ENCODE measurements at regions of chr14 and their contacts with region 1.

Region 1: GRCh38 chr14:20682435-20683124 is 1.8 kb upstream of the RNASE4 start:
- DNase-seq: peak; percentile 63 to 83 (median 79)
- ATAC-seq: peak; percentile 75
- H3K4me3 ChIP-seq: peak overlapping the region; percentile 98
- H3K4me3 Mint-ChIP-seq: no peak overlapping the region
- H3K27ac ChIP-seq: peak overlapping the region; percentile 91
- H3K27ac Mint-ChIP-seq: no peak overlapping the region
- H3K4me1 ChIP-seq: peaks cover 18 to 24% of the 10 kb centered on the region in 2 donors
- H3K4me1 Mint-ChIP-seq: peaks cover 14 to 35% (median 32%) of the 10 kb centered on the region in 7 donors
- H3K27me3 ChIP-seq: no peaks in the 10 kb centered on the region
- H3K27me3 Mint-ChIP-seq: no peaks in the 10 kb centered on the region

Region 2: DNA sequence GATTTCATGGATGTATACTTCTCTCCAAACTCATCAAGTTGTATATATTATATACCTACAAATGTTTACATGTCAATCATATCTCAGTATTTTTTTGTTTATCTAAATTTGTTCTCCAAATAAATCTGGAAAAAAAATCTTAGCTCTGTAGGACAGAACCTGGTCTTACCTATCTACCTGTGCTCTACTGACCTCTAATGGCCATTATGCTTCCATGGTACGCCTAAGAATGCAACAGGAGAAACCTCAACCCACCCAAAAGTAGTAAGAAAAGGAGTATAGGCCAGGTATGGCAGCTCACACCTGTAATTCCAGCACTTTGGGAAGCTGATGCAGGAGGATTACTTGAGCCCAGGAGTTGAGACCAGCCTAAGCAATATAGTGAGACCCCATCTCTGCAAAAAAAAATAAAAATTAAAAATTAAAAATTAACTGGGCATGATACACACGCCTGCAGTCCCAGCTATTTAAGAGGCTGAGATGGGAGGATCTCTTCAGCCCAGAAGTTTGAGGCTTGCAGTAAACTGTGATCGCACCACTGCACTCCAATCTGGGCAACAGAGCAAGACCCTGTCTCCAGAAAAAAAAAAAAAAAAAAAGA is 434.8 kb before region 1 on chr14:
- CTCF ChIA-PET with region 1: no interaction called
- POLR2A ChIA-PET with region 1: no interaction called
- intact Hi-C with region 1: no loop called
- DNase-seq: peak in 1 of 9 donors; percentile 5
- ATAC-seq: no peak
- H3K4me3 ChIP-seq: no peak overlapping the region
- H3K4me3 Mint-ChIP-seq: no peak overlapping the region
- H3K27ac ChIP-seq: no peak overlapping the region
- H3K27ac Mint-ChIP-seq: no peak overlapping the region
- H3K4me1 ChIP-seq: no peaks in the 10 kb centered on the region
- H3K4me1 Mint-ChIP-seq: no peaks in the 10 kb centered on the region
- H3K27me3 ChIP-seq: no peaks in the 10 kb centered on the region
- H3K27me3 Mint-ChIP-seq: no peaks in the 10 kb centered on the region

Region 3: DNA sequence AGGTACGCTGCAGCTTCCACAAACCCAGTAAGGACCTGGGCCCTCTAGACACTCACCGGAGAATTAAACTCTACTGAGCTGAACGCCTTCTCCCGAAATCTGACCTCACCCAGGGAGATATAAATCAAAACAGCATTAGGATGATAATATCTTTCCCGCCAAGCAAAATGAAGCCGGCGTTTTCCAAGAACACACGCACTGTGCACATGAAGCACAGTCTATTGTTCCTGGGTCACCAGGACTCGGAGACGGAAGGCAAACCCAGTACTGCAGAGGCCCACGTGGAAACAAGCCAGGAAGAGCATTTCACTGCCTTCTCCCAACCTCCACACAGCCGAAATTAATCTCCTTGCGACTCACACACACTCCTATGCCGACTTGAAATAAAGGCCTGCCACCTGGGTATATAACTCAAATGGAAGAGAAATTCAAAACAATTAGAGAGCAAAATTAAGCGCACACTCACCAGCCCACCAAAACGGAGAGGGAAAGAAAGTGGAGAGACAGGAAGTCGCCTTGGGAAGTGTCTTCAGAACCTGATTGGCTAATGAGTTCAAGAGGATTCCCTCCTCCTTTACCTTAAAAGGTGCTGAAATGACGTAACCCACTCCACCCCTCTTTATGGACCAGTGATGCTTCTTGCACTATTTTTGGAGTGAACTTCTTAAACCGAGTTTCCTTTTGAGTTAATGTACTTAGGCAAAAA is 349.6 kb before region 1 on chr14 and contains the start of gene CCNB1IP1:
- CTCF ChIA-PET with region 1: interaction called, 9 read pairs
- POLR2A ChIA-PET with region 1: interaction called, 17 read pairs
- intact Hi-C with region 1: loop called in 1 of 2 experiments (anchors 2 kb)
- DNase-seq: peak; percentile 11 to 80 (median 64)
- ATAC-seq: peak; percentile 99
- H3K4me3 ChIP-seq: peak within 1 kb of the TSS; percentile 97
- H3K4me3 Mint-ChIP-seq: peak within 1 kb of the TSS; percentile 85 to 100 (median 96)
- H3K27ac ChIP-seq: peak within 1 kb of the TSS; percentile 62
- H3K27ac Mint-ChIP-seq: peak within 1 kb of the TSS; percentile 67 to 96 (median 92)
- H3K4me1 ChIP-seq: no peaks in the 10 kb centered on the region
- H3K4me1 Mint-ChIP-seq: peaks cover 12 to 49% (median 34%) of the 10 kb centered on the region in 7 donors
- H3K27me3 ChIP-seq: no peaks in the 10 kb centered on the region
- H3K27me3 Mint-ChIP-seq: peaks cover 0 to 4% (median 0%) of the 10 kb centered on the region in 5 donors
- total RNA-seq, gene CCNB1IP1: 19.1 to 29.8 (median 28.7) TPM

Region 4: GRCh38 chr14:20454516-20455354 is 227.8 kb before region 1 on chr14 and contains the starts of genes APEX1 and OSGEP:
- CTCF ChIA-PET with region 1: interaction called, 3 read pairs
- POLR2A ChIA-PET with region 1: interaction called, 21 read pairs
- intact Hi-C with region 1: loop called (anchors 1 to 2 kb)
- DNase-seq: peak; percentile 86 to 99 (median 98)
- ATAC-seq: peak; percentile 88
- H3K4me3 ChIP-seq: peak within 1 kb of the TSS; percentile 80
- H3K4me3 Mint-ChIP-seq: peak within 1 kb of the TSS in 6 of 10 donors; percentile 7 to 43 (median 30)
- H3K27ac ChIP-seq: peak within 1 kb of the TSS; percentile 85
- H3K27ac Mint-ChIP-seq: no peak within 1 kb of the TSS
- H3K4me1 ChIP-seq: peaks cover 13 to 18% of the 10 kb centered on the region in 2 donors
- H3K4me1 Mint-ChIP-seq: peaks cover 12 to 30% (median 19%) of the 10 kb centered on the region in 7 donors
- H3K27me3 ChIP-seq: no peaks in the 10 kb centered on the region
- H3K27me3 Mint-ChIP-seq: no peaks in the 10 kb centered on the region
- total RNA-seq, gene APEX1: 97.4 to 159 (median 129) TPM
- total RNA-seq, gene OSGEP: 54.2 to 77.2 (median 69.1) TPM

Region 5: GRCh38 chr14:20632682-20633428 is 49.7 kb before region 1 on chr14:
- CTCF ChIA-PET with region 1: interaction called, 5 read pairs
- POLR2A ChIA-PET with region 1: interaction called, 39 read pairs
- intact Hi-C with region 1: loop called (anchors 1 kb)
- DNase-seq: peak in 8 of 9 donors; percentile 45 to 80 (median 64)
- ATAC-seq: peak; percentile 70
- H3K4me3 ChIP-seq: peak overlapping the region; percentile 51
- H3K4me3 Mint-ChIP-seq: peak overlapping the region; percentile 74 to 93 (median 88)
- H3K27ac ChIP-seq: no peak overlapping the region
- H3K27ac Mint-ChIP-seq: peak overlapping the region; percentile 77 to 98 (median 88)
- H3K4me1 ChIP-seq: peaks cover 0 to 11% of the 10 kb centered on the region in 2 donors
- H3K4me1 Mint-ChIP-seq: peaks cover 17 to 59% (median 45%) of the 10 kb centered on the region in 7 donors
- H3K27me3 ChIP-seq: no peaks in the 10 kb centered on the region
- H3K27me3 Mint-ChIP-seq: peaks cover 26 to 82% (median 35%) of the 10 kb centered on the region in 5 donors

Region 6: GRCh38 chr14:20989572-20990551 is 307.3 kb after region 1 on chr14 and contains the start of gene METTL17:
- CTCF ChIA-PET with region 1: no interaction called
- POLR2A ChIA-PET with region 1: no interaction called
- intact Hi-C with region 1: loop called in 1 of 2 experiments (anchors 5 kb)
- DNase-seq: peak; percentile 64 to 88 (median 81)
- ATAC-seq: peak; percentile 95
- H3K4me3 ChIP-seq: peak within 1 kb of the TSS; percentile 86
- H3K4me3 Mint-ChIP-seq: peak within 1 kb of the TSS; percentile 86 to 97 (median 92)
- H3K27ac ChIP-seq: peak within 1 kb of the TSS; percentile 77
- H3K27ac Mint-ChIP-seq: peak within 1 kb of the TSS; percentile 86 to 98 (median 95)
- H3K4me1 ChIP-seq: peaks cover 12 to 16% of the 10 kb centered on the region in 2 donors
- H3K4me1 Mint-ChIP-seq: peaks cover 0 to 46% (median 37%) of the 10 kb centered on the region in 7 donors
- H3K27me3 ChIP-seq: no peaks in the 10 kb centered on the region
- H3K27me3 Mint-ChIP-seq: no peaks in the 10 kb centered on the region
- total RNA-seq, gene METTL17: 75.4 to 129 (median 96.7) TPM

Region 7: GRCh38 chr14:21476925-21477681 is 794.5 kb after region 1 on chr14 and contains the starts of genes RAB2B and TOX4:
- CTCF ChIA-PET with region 1: no interaction called
- POLR2A ChIA-PET with region 1: no interaction called
- intact Hi-C with region 1: loop called in 1 of 2 experiments (anchors 2 kb)
- DNase-seq: peak; percentile 83 to 98 (median 97)
- ATAC-seq: peak; percentile 99
- H3K4me3 ChIP-seq: peak within 1 kb of the TSS; percentile 99
- H3K4me3 Mint-ChIP-seq: peak within 1 kb of the TSS; percentile 96 to 100 (median 99)
- H3K27ac ChIP-seq: peak within 1 kb of the TSS; percentile 88
- H3K27ac Mint-ChIP-seq: peak within 1 kb of the TSS; percentile 93 to 100 (median 98)
- H3K4me1 ChIP-seq: peaks cover 21 to 22% of the 10 kb centered on the region in 2 donors
- H3K4me1 Mint-ChIP-seq: peaks cover 18 to 74% (median 58%) of the 10 kb centered on the region in 7 donors
- H3K27me3 ChIP-seq: no peaks in the 10 kb centered on the region
- H3K27me3 Mint-ChIP-seq: no peaks in the 10 kb centered on the region
- total RNA-seq, gene RAB2B: 26.6 to 32.8 (median 30.5) TPM
- total RNA-seq, gene TOX4: 78.5 to 116 (median 86.5) TPM